ENCODE measurements at regions of chr16 and their contacts with region 1.

Region 1: DNA sequence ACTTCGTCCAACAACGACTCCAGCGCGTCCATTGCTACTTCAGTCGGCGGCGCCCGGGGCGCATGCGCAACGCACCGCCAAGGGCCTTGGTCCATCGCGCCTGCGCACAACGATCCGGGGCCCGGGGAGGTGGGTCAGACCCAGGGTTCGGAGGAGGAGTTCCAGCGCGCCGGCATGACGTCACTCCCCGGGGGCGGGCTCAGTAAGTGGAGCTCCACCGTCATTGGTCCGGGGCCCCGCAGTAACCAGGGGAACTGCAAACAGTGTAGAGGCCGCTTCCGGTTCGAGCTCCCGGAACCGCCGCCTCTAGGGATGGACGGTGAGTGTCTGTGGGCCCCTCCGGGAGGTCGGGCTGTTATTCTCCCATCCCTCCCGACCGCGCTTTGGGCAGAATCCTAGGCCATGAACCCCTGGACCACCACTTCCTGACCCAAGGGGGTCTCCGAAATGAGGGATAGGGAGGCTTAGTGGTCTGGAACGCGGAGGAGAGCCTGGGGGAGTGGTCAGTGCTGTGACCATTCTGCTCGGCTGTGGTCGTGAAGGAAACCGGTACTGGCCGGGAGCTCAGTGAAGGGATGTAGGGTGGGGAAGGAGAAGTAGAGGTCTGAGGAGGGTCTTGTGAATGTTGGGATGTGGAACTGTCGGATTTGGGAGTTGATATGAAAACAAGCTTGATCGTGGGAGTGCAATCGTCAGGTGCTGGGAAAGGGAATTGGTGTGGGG is at the starts of genes GTF3C1 and KATNIP:
- DNase-seq: peak; percentile 97
- ATAC-seq: peak; percentile 99
- H3K4me3 ChIP-seq: peak within 1 kb of the TSS; percentile 93
- H3K27ac ChIP-seq: peak within 1 kb of the TSS; percentile 79
- H3K4me1 ChIP-seq: peaks cover 11% of the 10 kb centered on the region
- H3K27me3 ChIP-seq: no peaks in the 10 kb centered on the region
- CTCF ChIP-seq: no peak
- POLR2A ChIP-seq: peak; percentile 96
- RAD21 ChIP-seq: no peak
- total RNA-seq, gene GTF3C1: 62.5 and 68.1 TPM in 2 replicates
- total RNA-seq, gene KATNIP: 16.7 and 18.9 TPM in 2 replicates

Region 2: DNA sequence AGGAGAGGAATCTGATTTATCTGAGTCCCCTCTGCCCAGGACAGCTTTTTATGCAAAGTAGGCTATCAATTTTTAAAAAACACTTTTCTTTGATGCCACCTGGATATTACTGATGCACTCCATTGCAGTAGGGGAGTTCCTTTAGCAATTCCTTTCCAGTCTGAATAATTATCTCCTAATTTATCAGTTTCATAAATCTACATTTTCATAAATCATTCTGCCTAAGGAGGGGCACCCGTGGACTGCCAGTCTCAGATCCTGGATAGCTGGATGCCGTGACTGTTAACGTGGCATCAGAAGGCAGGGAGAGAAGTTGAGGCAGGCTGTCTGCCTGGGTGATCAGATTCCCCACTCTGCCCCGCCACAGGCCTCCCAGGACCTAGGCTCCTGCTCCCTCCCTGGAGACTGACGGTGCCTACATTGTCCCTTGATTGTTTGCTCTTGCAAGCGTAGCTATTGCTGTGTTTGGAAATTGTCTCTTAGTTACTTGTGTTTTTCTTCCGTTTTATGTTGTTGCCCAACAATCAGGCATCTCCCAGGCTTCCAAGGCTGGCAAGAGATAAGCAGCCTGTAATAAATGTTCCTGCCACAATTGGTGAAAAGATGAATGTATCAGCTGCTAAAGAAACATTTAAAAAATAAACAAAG is 75.2 kb after region 1 on chr16:
- CTCF ChIA-PET with region 1: no interaction called
- POLR2A ChIA-PET with region 1: no interaction called
- dilution Hi-C with region 1: no loop called
- in situ Hi-C with region 1: no loop called
- intact Hi-C with region 1: loop called (anchors 5 kb)
- DNase-seq: peak; percentile 26
- ATAC-seq: peak; percentile 36
- H3K4me3 ChIP-seq: no peak overlapping the region
- H3K27ac ChIP-seq: no peak overlapping the region
- H3K4me1 ChIP-seq: peaks cover 11% of the 10 kb centered on the region; the same call in 1 of the 2 replicates
- H3K27me3 ChIP-seq: no peaks in the 10 kb centered on the region
- CTCF ChIP-seq: no peak
- POLR2A ChIP-seq: no peak
- RAD21 ChIP-seq: no peak

Measured in IMR-90 (cell line).